ENCODE measurements at regions of chr2 and their contacts with region 1.

Region 1: DNA sequence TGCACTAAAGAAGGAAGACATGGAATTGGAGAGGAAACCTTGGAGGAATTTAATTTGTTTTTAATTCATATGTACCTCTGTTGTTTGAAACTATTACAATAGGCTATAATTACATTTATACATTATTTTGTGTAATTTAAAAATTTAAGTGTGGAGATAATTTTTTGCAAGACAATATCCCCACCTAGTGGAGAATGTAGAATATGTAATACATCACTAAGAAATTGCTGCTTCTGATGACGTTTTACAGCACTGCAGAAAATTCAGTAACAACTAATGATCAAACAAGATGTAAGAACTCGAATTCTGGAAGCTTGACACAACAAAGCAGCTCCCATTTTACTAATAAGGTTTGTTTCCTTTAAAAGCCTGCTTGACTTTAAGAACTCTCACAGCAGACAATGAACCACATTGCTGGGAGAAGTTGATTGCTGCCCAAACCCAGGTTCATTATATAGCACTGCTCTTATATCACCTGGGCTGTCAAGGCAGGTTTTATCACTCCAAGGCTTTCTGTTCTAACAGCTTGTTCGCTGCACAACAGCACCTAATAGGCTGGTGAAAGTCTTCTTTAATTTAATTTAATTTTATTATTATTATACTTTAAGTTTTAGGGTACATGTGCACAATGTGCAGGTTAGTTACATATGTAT is 53.4 kb downstream of the THADA start:
- DNase-seq: no peak
- H3K4me3 ChIP-seq: no peak overlapping the region
- H3K27ac ChIP-seq: no peak overlapping the region
- H3K4me1 ChIP-seq: peaks cover 0 to 41% (median 18%) of the 10 kb centered on the region in 4 donors
- H3K27me3 ChIP-seq: no peaks in the 10 kb centered on the region
- CTCF ChIP-seq: peak; percentile 43 to 62 (median 58)
- EP300 ChIP-seq: no peak
- POLR2A ChIP-seq: no peak

Region 2: DNA sequence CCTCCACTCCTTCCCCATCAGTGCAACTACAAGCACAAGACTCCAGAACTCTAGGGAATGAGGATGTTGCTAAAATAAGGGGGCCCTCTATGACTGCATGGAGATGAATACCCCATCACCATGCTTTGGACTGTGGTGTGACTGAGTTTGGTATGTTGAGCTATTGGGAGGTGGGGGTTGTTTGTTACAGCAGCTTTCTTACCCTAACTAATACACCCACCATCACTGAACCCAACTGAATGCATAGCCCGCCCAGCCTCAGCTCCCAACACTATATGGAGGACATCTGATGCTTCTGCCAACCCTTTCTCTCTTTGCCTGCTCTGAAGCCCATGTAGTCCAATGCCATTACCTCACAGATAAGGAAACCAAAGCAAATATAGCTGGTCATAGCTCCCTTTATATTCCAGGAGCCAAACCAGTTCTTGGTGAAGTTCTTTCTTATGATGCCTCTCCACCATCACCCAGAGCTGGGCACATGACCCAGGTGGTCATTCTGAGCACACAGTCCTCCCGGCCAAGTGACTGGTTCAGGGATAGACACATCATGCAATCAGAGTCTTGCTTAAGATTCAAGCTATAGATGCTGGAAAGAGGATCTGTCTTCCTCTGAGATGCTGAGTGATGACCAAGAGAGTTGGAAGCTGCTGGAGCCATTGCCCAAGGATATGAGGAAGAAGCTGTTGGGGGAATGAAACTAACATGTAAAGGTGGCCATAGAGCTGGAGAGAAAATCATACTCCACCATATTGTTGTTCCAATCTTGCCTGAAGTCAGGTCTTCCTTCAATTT is 594.4 kb before region 1 on chr2:
- intact Hi-C with region 1: loop called (anchors 2 kb)
- DNase-seq: no peak
- H3K4me3 ChIP-seq: no peak overlapping the region
- H3K27ac ChIP-seq: no peak overlapping the region
- H3K4me1 ChIP-seq: peaks cover 0 to 9% (median 7%) of the 10 kb centered on the region in 4 donors
- H3K27me3 ChIP-seq: no peaks in the 10 kb centered on the region
- CTCF ChIP-seq: no peak
- EP300 ChIP-seq: no peak
- POLR2A ChIP-seq: no peak

Measured in sigmoid colon (tissue), 7 donors.